ENCODE measurements at regions of chr16 and their contacts with region 1.

Region 1: DNA sequence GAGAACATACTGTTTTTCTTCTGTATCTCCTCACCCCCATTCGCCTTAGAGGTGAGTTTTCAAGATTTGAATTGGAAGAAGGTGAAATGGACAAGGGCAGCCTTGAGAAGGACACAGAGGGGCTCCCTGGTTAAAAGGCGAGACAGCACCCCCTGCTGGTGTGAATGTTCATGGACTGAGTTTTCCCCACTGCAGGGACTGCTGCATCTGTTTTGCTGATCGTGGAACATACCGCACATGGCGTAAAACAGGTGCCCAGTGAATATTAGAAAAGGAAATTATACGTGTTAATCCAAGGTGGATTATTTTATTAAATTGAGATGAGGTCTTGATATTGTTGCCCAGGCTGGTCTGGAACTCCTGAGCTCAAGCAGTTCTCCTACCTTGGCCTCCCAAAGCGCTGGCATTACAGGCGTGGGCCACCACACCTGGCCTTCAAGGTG is 54.5 kb downstream of the NDE1 start:
- H3K4me3 ChIP-seq: no peak overlapping the region
- H3K27ac ChIP-seq: no peak overlapping the region
- H3K4me1 ChIP-seq: no peaks in the 10 kb centered on the region
- CTCF ChIP-seq: peak; percentile 56

Region 2: DNA sequence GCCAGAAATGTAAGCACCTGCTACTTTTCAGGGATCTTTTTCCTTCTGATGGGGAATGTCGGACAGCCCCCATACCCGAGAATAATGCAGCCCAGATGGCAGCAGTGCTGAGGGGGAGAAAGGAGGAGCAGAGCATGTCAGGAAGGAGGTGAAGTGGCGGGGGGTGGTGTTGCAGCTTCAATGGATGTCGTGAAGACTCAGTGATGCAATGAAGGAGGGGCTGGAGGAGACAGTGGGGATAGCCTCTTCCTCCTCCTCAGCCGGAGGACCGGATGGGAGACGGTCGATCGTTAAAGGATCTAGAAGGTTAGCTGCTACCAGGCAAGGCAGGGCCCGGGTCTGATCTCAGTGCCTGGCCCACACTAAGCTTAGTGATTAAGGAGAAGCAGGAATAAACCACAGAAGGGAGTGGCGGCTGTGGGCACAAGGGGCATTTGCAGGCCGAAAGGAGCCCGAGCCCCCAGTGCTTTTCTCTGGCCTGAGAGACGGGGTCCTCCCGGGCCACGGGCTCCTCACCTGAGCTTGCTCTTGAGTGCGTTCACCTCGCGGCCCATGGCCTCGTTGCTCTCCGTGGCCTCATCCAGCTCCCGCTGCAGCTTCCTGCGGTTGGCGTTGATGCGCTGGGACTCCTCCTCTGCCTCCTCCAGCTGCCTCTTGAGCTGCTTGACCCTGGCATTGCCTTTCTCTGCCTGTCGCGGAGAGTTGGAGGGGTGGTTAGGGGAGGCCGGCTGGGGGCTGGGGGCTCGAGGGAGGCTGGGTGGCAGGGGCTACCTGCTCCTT is 10.0 kb after region 1 on chr16:
- CTCF ChIA-PET with region 1: interaction called, 11 read pairs
- POLR2A ChIA-PET with region 1: no interaction called
- H3K4me3 ChIP-seq: no peak overlapping the region
- H3K27ac ChIP-seq: no peak overlapping the region
- H3K4me1 ChIP-seq: no peaks in the 10 kb centered on the region
- CTCF ChIP-seq: no peak

Region 3: GRCh38 chr16:15749366-15749765 is 44.8 kb after region 1 on chr16:
- CTCF ChIA-PET with region 1: no interaction called
- POLR2A ChIA-PET with region 1: no interaction called
- H3K4me3 ChIP-seq: no peak overlapping the region
- H3K27ac ChIP-seq: no peak overlapping the region
- H3K4me1 ChIP-seq: no peaks in the 10 kb centered on the region
- CTCF ChIP-seq: no peak